WTC11 (cell line): ENCODE measurements at regions of chr13 and their contacts with region 1.

Region 1: DNA sequence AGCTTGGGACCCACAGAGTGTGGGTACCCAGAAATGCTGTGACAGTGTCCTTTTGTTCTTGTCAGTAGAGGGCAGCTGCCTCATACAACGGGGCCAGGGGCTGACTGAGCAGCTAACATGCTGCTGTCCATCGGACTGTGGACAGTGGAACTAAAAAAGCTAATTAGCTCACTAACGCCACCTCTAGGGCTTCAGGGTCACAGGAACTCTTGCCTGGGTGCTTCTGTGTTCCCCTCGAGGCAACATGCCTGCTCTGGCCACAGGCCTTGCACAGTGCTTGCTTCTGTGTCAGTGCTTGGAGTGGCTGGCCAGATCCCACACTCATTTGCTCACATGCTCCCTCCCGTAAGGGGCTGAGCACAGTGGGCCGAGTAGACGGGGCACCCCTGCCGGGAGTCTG is 377.0 kb downstream of the OLFM4 start:
- DNase-seq: peak; percentile 68
- ATAC-seq: peak; percentile 99
- H3K4me3 Mint-ChIP-seq: no peak overlapping the region
- H3K27ac Mint-ChIP-seq: no peak overlapping the region
- H3K4me1 Mint-ChIP-seq: no peaks in the 10 kb centered on the region
- H3K27me3 Mint-ChIP-seq: no peaks in the 10 kb centered on the region
- CTCF ChIP-seq: no peak

Region 2: GRCh38 chr13:53311561-53311960 is 94.1 kb before region 1 on chr13:
- CTCF ChIA-PET with region 1: interaction called, 10 read pairs
- POLR2A ChIA-PET with region 1: no interaction called
- DNase-seq: no peak
- ATAC-seq: peak; percentile 60
- H3K4me3 Mint-ChIP-seq: no peak overlapping the region
- H3K27ac Mint-ChIP-seq: no peak overlapping the region
- H3K4me1 Mint-ChIP-seq: peaks cover 23% of the 10 kb centered on the region
- H3K27me3 Mint-ChIP-seq: peaks cover 79% of the 10 kb centered on the region
- CTCF ChIP-seq: no peak

Region 3: GRCh38 chr13:53782488-53782961 is 376.9 kb after region 1 on chr13:
- CTCF ChIA-PET with region 1: interaction called, 10 read pairs
- POLR2A ChIA-PET with region 1: no interaction called
- DNase-seq: no peak
- ATAC-seq: peak; percentile 76
- H3K4me3 Mint-ChIP-seq: peak overlapping the region; percentile 56
- H3K27ac Mint-ChIP-seq: no peak overlapping the region
- H3K4me1 Mint-ChIP-seq: peaks cover 37% of the 10 kb centered on the region
- H3K27me3 Mint-ChIP-seq: peaks cover 5% of the 10 kb centered on the region; the same call in 1 of the 2 replicates
- CTCF ChIP-seq: peak; percentile 80

Region 4: GRCh38 chr13:54210397-54211035 is 804.9 kb after region 1 on chr13:
- CTCF ChIA-PET with region 1: no interaction called
- POLR2A ChIA-PET with region 1: no interaction called
- DNase-seq: no peak
- ATAC-seq: peak; percentile 43
- H3K4me3 Mint-ChIP-seq: no peak overlapping the region
- H3K27ac Mint-ChIP-seq: peak overlapping the region; percentile 43; the same call in 1 of the 2 replicates
- H3K4me1 Mint-ChIP-seq: peaks cover 33% of the 10 kb centered on the region
- H3K27me3 Mint-ChIP-seq: no peaks in the 10 kb centered on the region
- CTCF ChIP-seq: no peak